Calu3 (cell line): ENCODE measurements at regions of chr9 and their contacts with region 1.

Region 1: GRCh38 chr9:112921549-112921948 is 30.9 kb upstream of the SLC46A2 start:
- DNase-seq: peak; percentile 7
- H3K4me3 Mint-ChIP-seq: no peak overlapping the region
- H3K27ac Mint-ChIP-seq: no peak overlapping the region
- H3K4me1 Mint-ChIP-seq: peaks cover 12% of the 10 kb centered on the region
- H3K27me3 Mint-ChIP-seq: no peaks in the 10 kb centered on the region
- CTCF ChIP-seq: no peak

Region 2: GRCh38 chr9:112971415-112971814 is 49.9 kb after region 1 on chr9:
- CTCF ChIA-PET with region 1: no interaction called
- intact Hi-C with region 1: loop called (anchors 2 kb)
- DNase-seq: peak; percentile 4
- H3K4me3 Mint-ChIP-seq: no peak overlapping the region
- H3K27ac Mint-ChIP-seq: no peak overlapping the region
- H3K4me1 Mint-ChIP-seq: no peaks in the 10 kb centered on the region
- H3K27me3 Mint-ChIP-seq: peaks cover 36% of the 10 kb centered on the region
- CTCF ChIP-seq: no peak

Region 3: GRCh38 chr9:113095561-113095960 is 174.0 kb after region 1 on chr9:
- CTCF ChIA-PET with region 1: no interaction called
- intact Hi-C with region 1: loop called (anchors 5 kb)
- DNase-seq: no peak
- H3K4me3 Mint-ChIP-seq: no peak overlapping the region
- H3K27ac Mint-ChIP-seq: no peak overlapping the region
- H3K4me1 Mint-ChIP-seq: no peaks in the 10 kb centered on the region
- H3K27me3 Mint-ChIP-seq: peaks cover 46% of the 10 kb centered on the region
- CTCF ChIP-seq: no peak

Region 4: GRCh38 chr9:113712023-113712422 is 790.5 kb after region 1 on chr9:
- CTCF ChIA-PET with region 1: no interaction called
- intact Hi-C with region 1: no loop called
- DNase-seq: no peak
- H3K4me3 Mint-ChIP-seq: no peak overlapping the region
- H3K27ac Mint-ChIP-seq: no peak overlapping the region
- H3K4me1 Mint-ChIP-seq: no peaks in the 10 kb centered on the region
- H3K27me3 Mint-ChIP-seq: peaks cover 42% of the 10 kb centered on the region
- CTCF ChIP-seq: no peak